Astrocyte of the cerebellum (primary cell): ENCODE measurements at regions of chr4 and their contacts with region 1.

Region 1: DNA sequence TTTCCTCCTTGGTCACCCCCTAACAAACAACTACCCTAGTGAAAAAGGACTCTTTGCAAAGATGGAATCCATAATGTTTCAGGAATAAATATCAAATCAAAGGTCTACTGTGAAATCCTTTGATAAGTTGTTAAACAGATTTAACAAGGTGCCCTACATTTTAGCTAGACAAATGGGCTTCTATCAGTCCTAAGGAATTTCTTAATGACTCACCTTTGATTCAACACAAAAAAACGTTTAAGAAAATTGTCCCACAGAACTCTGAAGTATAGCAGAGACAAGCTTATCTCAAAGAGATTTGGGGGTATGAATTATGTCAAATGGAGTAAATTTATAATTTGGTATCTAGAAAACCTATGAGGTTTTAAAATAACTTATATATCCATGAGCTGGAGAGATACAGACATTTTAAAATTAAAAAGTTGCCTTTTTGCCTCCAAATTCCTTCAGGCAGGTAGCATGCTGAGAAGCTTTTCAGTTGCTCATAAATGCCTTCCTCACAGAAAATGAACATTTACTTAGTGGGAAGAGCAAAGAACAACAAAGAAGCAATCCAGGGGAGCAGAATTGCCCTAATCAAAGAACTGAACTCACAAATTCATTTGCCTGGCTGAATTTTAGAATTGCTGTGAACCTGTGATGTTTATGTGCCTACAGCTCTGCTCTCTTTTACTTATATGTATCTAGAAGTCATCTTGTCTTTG is 649.3 kb downstream of the STPG2 start:
- DNase-seq: no peak
- H3K4me3 ChIP-seq: no peak overlapping the region
- CTCF ChIP-seq: no peak

Region 2: DNA sequence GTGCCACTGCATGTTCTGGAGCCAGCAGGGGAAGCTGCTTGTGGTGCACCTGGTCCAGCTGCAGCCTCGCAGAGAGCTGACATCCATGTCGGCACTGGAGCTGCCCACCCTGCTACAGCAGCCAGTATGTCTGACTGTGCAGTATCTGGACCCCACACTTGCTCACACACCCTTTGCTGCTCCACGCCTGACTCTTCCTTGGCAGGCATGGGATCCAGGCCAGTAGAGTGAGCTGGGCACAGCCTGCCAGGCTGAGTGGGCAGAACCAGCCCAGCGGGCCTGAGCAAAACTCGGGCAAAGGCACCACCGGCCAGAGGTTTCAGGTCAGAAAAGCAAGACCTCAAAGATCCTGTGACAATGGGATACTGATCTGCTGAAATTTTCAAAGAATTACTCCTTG is 40.8 kb before region 1 on chr4:
- in situ Hi-C with region 1: loop called (anchors 5 kb)
- DNase-seq: no peak
- H3K4me3 ChIP-seq: no peak overlapping the region
- CTCF ChIP-seq: no peak